Activated T-helper 2 cell treated with anti-CD3 and anti-CD28 coated beads, Interferon-gamma antibody, Interleukin-2, Interleukin-4, amounts not matched to agents 10 μg/mL and 5 μg/mL and 100 μg/mL, durations not matched to agents 14 hours and 24 hours and 36 hours (primary cell): ENCODE measurements at regions of chrX and their contacts with region 1.

Region 1: GRCh38 chrX:51461053-51462044 is 35.0 kb downstream of the NUDT11 start:
- DNase-seq: no peak
- H3K4me3 Mint-ChIP-seq: no peak overlapping the region
- H3K27ac Mint-ChIP-seq: no peak overlapping the region
- H3K4me1 Mint-ChIP-seq: no peaks in the 10 kb centered on the region
- H3K27me3 Mint-ChIP-seq: no peaks in the 10 kb centered on the region

Region 2: DNA sequence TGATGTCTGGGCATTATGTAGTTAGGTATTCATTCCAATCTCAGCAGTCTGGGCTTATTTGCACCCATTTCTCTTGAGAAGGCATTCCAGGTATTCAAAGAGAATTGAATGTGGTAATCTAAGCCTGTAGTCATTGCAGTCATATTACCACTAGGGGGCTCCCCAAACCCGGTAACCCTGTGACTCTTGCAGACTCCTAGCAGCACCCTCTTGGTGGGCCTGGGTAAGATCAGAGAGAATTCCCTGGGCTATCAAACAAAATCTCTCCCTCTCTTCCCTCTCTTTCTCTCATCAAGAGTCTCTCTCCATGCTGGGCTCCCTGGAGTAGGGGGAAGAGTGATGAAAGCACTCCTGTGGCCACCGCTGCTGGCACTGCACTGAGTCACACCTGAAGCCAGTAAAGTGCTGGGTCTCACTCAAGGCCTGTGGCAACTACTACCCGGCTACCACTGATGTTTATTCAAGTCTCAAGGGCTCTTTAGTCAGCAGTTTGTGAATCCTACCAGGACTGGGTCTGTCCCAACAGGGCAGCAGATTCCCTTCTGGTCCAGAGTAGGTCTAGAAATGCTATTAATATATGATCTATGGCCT is 316.4 kb before region 1 on chrX:
- intact Hi-C with region 1: loop called (anchors 10 kb)
- DNase-seq: no peak
- H3K4me3 Mint-ChIP-seq: no peak overlapping the region
- H3K27ac Mint-ChIP-seq: no peak overlapping the region
- H3K4me1 Mint-ChIP-seq: no peaks in the 10 kb centered on the region
- H3K27me3 Mint-ChIP-seq: peaks cover 5% of the 10 kb centered on the region

Region 3: DNA sequence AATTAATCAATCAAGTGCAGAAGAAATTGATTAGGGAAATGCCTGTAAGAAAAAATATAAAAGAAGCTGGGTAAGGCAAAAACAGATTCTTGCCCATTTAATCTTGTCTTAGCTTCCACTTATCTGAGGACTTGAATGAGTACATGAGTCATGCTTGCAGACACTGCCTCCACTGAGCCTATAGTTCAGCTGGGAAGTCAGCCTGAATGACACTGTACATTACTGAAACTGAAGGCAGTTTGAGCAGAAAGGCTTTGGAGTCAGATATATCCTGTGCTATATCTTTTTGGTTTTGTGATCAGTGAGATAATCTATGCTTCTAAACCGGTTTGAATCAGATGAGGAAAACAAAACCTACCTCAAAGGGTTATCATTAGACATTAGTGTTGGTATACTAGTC is 26.2 kb before region 1 on chrX:
- intact Hi-C with region 1: no loop called
- DNase-seq: no peak
- H3K4me3 Mint-ChIP-seq: no peak overlapping the region
- H3K27ac Mint-ChIP-seq: no peak overlapping the region
- H3K4me1 Mint-ChIP-seq: peaks cover 2% of the 10 kb centered on the region
- H3K27me3 Mint-ChIP-seq: peaks cover 6% of the 10 kb centered on the region

Region 4: DNA sequence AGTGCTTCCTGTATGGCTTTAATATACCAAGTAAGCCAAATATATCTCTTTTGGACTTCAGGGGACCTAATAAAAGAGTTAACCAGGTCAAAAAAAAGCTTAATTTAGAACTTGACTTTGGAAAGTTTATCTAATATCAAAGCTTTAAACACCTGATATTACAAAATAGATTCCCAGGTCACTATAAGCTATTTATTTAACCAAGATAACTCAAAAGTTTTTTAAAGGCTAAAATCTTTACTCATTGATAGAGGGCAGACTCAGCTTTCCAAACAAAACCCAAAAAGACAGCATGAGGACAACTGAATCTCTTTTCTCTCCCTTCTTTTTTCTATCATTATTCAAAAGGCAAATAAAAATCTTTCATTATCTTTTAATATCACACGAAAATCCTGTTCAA is 15.6 kb after region 1 on chrX:
- intact Hi-C with region 1: no loop called
- DNase-seq: no peak
- H3K4me3 Mint-ChIP-seq: no peak overlapping the region
- H3K27ac Mint-ChIP-seq: no peak overlapping the region
- H3K4me1 Mint-ChIP-seq: no peaks in the 10 kb centered on the region
- H3K27me3 Mint-ChIP-seq: no peaks in the 10 kb centered on the region

Region 5: GRCh38 chrX:51917604-51918003 is 456.3 kb after region 1 on chrX:
- intact Hi-C with region 1: no loop called
- DNase-seq: no peak
- H3K4me3 Mint-ChIP-seq: no peak overlapping the region
- H3K27ac Mint-ChIP-seq: no peak overlapping the region
- H3K4me1 Mint-ChIP-seq: no peaks in the 10 kb centered on the region
- H3K27me3 Mint-ChIP-seq: peaks cover 1% of the 10 kb centered on the region